IMR-90 (cell line): ENCODE measurements at regions of chr18 and their contacts with region 1.

Region 1: GRCh38 chr18:54224379-54225014 is at the start of gene MBD2:
- DNase-seq: peak; percentile 93
- ATAC-seq: peak; percentile 98
- H3K4me3 ChIP-seq: peak within 1 kb of the TSS; percentile 80
- H3K27ac ChIP-seq: peak within 1 kb of the TSS; percentile 76
- H3K4me1 ChIP-seq: no peaks in the 10 kb centered on the region
- H3K27me3 ChIP-seq: no peaks in the 10 kb centered on the region
- CTCF ChIP-seq: peak; percentile 24; the same call in 1 of the 2 replicates
- POLR2A ChIP-seq: peak; percentile 38; the same call in 1 of the 2 replicates
- RAD21 ChIP-seq: 0 out of 2 replicates have a peak, but pooled peaks have one; percentile 11
- total RNA-seq, gene MBD2: 9.7 and 27.5 TPM in 2 replicates

Region 2: DNA sequence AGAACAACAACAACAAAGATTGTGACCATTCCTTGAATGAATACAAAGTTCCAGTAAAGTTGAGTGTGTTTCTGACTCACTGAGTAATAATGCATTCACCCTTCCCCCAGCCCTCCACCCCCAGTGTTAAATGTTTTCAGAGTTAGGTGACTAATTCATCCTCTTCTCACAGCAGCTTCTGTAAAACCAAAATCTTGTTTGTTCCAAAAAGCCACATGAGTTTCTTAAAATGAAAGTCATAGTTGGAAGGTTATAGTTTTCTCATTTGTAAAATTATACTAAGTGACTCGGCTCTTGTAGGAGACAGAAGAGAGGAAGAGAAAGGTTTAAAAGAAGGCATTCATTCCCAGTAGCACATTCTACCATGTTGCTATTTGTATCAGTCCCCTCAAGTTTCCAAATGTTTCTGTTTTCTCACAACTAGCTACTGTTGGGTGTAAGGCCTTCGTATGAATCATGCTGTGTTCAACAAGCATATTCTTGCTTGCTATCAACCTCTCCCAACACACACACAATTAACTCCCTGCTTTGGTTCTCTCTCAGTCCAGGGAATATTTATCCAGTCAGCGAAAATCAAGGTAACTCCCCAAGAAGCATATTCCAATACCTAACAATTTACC is 75.3 kb before region 1 on chr18:
- CTCF ChIA-PET with region 1: no interaction called
- POLR2A ChIA-PET with region 1: no interaction called
- dilution Hi-C with region 1: no loop called
- in situ Hi-C with region 1: no loop called
- intact Hi-C with region 1: loop called (anchors 1 kb)
- DNase-seq: peak; percentile 88
- ATAC-seq: peak; percentile 93
- H3K4me3 ChIP-seq: peak overlapping the region; percentile 10; the same call in 1 of the 2 replicates
- H3K27ac ChIP-seq: peak overlapping the region; percentile 30; the same call in 1 of the 2 replicates
- H3K4me1 ChIP-seq: peaks cover 7% of the 10 kb centered on the region
- H3K27me3 ChIP-seq: no peaks in the 10 kb centered on the region
- CTCF ChIP-seq: no peak
- POLR2A ChIP-seq: no peak
- RAD21 ChIP-seq: no peak

Region 3: DNA sequence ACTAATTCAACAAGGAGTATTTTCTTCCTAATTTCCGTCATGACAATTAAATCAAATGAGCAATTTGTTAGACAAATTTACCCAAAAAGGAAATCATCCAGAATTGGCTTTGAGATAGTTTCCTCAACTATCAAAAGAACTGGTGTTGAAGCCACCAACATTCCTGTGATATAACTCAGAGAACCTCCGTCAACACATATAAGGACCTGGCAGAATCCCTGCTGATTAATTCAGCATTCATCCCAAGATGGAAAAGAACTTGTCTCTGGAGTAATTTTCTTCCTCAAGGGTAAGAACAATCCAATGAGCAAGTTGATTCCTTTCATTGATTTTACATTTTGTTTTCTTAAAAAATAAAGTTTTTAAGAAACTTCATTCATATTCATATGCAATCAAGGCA is 62.1 kb before region 1 on chr18:
- CTCF ChIA-PET with region 1: no interaction called
- POLR2A ChIA-PET with region 1: no interaction called
- dilution Hi-C with region 1: no loop called
- in situ Hi-C with region 1: no loop called
- intact Hi-C with region 1: loop called (anchors 5 kb)
- DNase-seq: peak; percentile 78
- ATAC-seq: peak; percentile 66
- H3K4me3 ChIP-seq: no peak overlapping the region
- H3K27ac ChIP-seq: no peak overlapping the region
- H3K4me1 ChIP-seq: peaks cover 7% of the 10 kb centered on the region
- H3K27me3 ChIP-seq: no peaks in the 10 kb centered on the region
- CTCF ChIP-seq: no peak
- POLR2A ChIP-seq: no peak
- RAD21 ChIP-seq: no peak

Region 4: DNA sequence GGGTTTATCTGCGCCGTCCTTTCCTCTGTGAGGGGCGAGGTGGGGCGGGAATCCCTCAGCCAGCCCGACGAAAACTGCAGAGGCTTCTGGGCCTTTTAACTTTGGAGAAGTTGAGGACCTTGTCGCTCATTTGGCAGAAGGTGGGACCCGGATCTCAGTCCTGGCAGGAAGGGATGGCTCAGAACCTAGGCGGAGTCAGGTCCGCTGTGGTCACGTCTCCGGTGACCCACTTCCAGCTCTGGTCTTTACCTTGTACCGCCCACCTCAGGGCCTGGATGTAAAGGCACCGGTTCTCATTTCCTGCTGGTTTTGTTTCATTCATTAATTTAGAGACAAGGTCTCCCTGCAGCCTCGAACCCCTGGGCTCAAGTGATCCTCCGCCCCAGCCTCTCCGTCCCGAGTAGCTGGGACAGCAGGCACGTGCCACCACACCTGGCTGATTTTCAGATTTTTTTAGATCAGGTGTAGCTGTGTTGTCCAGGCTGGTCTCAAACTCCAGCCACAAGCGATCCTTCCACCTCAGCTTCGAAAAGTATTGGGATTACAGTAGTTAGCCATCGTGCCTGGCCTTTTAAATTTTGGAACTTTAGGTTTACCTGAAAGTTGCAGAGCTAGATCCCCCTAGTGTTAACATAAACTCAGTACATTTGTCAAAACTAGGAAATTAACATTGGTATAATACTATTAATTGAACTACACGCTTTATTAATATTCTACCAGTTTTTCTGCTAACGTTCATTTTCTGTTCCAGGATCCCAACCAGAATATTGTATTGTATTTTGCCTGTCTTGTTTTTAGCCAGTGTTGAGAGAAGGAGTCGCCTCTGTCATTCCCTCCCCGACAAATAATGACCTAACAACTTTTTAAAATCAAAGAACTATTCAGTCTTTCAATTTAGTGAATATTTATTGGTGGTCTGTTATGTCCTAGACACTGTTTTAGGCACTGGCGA is 45.7 kb after region 1 on chr18:
- CTCF ChIA-PET with region 1: no interaction called
- POLR2A ChIA-PET with region 1: no interaction called
- dilution Hi-C with region 1: no loop called
- in situ Hi-C with region 1: no loop called
- intact Hi-C with region 1: loop called (anchors 1 kb)
- DNase-seq: peak; percentile 18
- ATAC-seq: peak; percentile 36
- H3K4me3 ChIP-seq: peak overlapping the region; percentile 66
- H3K27ac ChIP-seq: peak overlapping the region; percentile 72
- H3K4me1 ChIP-seq: no peaks in the 10 kb centered on the region
- H3K27me3 ChIP-seq: no peaks in the 10 kb centered on the region
- CTCF ChIP-seq: peak; percentile 34; the same call in 1 of the 2 replicates
- POLR2A ChIP-seq: no peak
- RAD21 ChIP-seq: peak; percentile 26

Region 5: DNA sequence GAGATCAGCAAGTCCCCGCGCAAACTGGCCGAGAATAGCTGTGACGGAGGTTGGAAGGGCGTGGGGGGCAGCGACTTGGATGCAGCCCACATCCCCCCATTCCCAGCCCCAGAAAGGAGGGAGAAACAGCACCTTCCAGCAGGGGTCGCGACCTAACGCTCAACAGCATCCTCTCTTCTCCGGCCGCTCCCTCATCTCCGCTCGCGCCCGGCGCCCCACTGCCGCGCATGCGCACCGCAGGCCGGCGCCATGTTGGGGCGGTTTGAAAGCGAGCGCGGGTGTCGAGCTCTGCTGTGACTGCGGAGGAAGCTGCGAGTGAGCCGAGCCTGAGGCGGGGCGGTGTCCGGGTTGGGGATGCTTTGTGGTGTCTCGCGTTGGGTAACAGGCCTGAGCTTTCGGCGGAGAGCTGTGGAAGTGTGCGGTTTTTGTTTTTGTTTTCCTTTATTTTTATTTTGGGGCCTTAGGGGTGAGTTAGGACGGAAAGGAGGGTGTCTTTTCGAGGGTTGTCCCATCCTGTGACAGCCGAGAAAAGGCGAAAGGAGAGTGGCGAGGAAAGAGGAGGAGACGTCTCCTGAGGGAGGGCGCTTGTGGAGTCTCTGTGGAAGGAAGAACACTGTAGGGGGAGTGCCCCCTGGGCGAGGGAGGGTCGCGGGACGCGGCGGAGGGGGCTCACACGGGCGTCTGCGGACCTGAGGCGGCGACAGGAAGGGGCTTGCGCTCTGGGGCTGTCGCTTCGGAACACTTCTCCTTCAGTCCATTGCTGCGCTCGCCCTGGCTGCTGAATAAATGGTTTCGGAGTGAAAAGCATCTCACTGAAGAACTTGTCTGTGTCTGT is 133.4 kb after region 1 on chr18 and contains the starts of genes C18orf54 and STARD6:
- CTCF ChIA-PET with region 1: no interaction called
- POLR2A ChIA-PET with region 1: no interaction called
- dilution Hi-C with region 1: no loop called
- in situ Hi-C with region 1: no loop called
- intact Hi-C with region 1: loop called (anchors 5 kb)
- DNase-seq: peak; percentile 85
- ATAC-seq: peak; percentile 94
- H3K4me3 ChIP-seq: peak within 1 kb of the TSS; percentile 68
- H3K27ac ChIP-seq: peak within 1 kb of the TSS; percentile 79
- H3K4me1 ChIP-seq: no peaks in the 10 kb centered on the region
- H3K27me3 ChIP-seq: no peaks in the 10 kb centered on the region
- CTCF ChIP-seq: 0 out of 2 replicates have a peak, but pooled peaks have one; percentile 16
- POLR2A ChIP-seq: peak; percentile 32; the same call in 1 of the 2 replicates
- RAD21 ChIP-seq: peak; percentile 10; the same call in 1 of the 2 replicates
- total RNA-seq, gene C18orf54: 3.0 and 5.6 TPM in 2 replicates
- total RNA-seq, gene STARD6: 0.28 TPM in 1 of 2 replicates, not detected in the other